MCF 10A (cell line): ENCODE measurements at regions of chr1 and their contacts with region 1.

Region 1: GRCh38 chr1:162023547-162024501 is at the start of gene OLFML2B:
- DNase-seq: peak; percentile 86
- H3K4me3 Mint-ChIP-seq: peak within 1 kb of the TSS; percentile 89
- H3K27ac Mint-ChIP-seq: peak within 1 kb of the TSS; percentile 65
- H3K4me1 Mint-ChIP-seq: peaks cover 15% of the 10 kb centered on the region
- H3K27me3 Mint-ChIP-seq: peaks cover 34% of the 10 kb centered on the region
- CTCF ChIP-seq: peak; percentile 45
- total RNA-seq, gene OLFML2B: not detected in 2 replicates

Region 2: GRCh38 chr1:161801955-161802354 is 221.9 kb before region 1 on chr1:
- CTCF ChIA-PET with region 1: interaction called, 11 read pairs
- POLR2A ChIA-PET with region 1: no interaction called
- intact Hi-C with region 1: no loop called
- DNase-seq: no peak
- H3K4me3 Mint-ChIP-seq: no peak overlapping the region
- H3K27ac Mint-ChIP-seq: no peak overlapping the region
- H3K4me1 Mint-ChIP-seq: no peaks in the 10 kb centered on the region
- H3K27me3 Mint-ChIP-seq: no peaks in the 10 kb centered on the region
- CTCF ChIP-seq: no peak

Region 3: DNA sequence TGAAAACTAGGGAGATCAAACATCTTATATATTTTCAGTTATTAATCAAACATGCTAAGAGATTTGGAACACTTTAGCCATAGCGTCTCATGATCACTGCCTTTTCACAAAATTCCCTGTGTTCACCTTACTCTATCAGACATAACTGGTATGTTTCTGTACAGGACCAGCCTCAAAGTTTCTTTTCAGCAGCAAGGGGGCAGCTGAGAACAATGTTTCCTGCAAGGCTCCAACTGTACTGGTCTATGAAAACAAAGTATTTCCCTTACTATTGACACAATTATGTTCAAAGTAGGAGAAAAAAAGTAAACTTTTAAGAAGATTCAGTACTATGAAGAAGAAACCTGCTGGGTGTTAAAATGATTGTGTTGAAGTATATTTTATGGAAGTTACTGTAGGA is 159.2 kb before region 1 on chr1:
- CTCF ChIA-PET with region 1: interaction called, 14 read pairs
- POLR2A ChIA-PET with region 1: no interaction called
- intact Hi-C with region 1: loop called (anchors 1 kb)
- DNase-seq: peak; percentile 38
- H3K4me3 Mint-ChIP-seq: no peak overlapping the region
- H3K27ac Mint-ChIP-seq: no peak overlapping the region
- H3K4me1 Mint-ChIP-seq: no peaks in the 10 kb centered on the region
- H3K27me3 Mint-ChIP-seq: no peaks in the 10 kb centered on the region
- CTCF ChIP-seq: peak; percentile 14

Region 4: DNA sequence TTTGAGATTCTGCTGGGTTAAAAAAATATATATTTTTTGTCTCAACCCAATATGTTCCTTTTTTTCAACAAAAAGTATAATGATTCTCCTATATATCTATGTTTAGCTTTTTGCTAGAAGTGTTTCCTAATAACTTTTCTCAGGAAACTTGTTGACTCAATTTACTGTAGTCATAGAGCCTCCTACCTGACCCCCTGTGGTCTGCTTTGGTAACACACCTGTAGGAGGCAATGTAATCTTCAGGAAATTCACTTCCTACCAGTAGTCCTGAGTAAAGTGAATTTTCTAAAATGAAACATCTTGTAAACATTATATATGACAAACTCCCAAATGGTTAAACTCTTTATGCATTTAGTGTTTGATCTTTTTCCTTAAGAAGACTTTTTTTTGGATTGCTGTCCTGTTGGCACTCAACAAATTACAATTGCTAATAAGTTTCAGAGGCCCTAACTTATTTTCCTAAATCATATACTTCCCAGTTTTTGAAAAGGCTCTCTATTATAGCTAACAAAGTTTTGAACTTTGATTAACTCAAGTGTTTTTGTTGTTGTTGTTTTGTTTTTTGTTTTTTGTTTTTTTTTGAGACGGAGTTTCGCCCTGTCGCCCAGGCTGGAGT is 118.4 kb before region 1 on chr1:
- CTCF ChIA-PET with region 1: interaction called, 16 read pairs
- POLR2A ChIA-PET with region 1: interaction called, 3 read pairs
- intact Hi-C with region 1: loop called (anchors 5 kb)
- DNase-seq: peak; percentile 67
- H3K4me3 Mint-ChIP-seq: no peak overlapping the region
- H3K27ac Mint-ChIP-seq: no peak overlapping the region
- H3K4me1 Mint-ChIP-seq: peaks cover 9% of the 10 kb centered on the region
- H3K27me3 Mint-ChIP-seq: no peaks in the 10 kb centered on the region
- CTCF ChIP-seq: peak; percentile 52

Region 5: GRCh38 chr1:161962091-161962887 is 61.5 kb before region 1 on chr1:
- CTCF ChIA-PET with region 1: interaction called, 4 read pairs
- POLR2A ChIA-PET with region 1: interaction called, 4 read pairs
- intact Hi-C with region 1: loop called (anchors 5 kb)
- DNase-seq: peak; percentile 71
- H3K4me3 Mint-ChIP-seq: peak overlapping the region; percentile 69
- H3K27ac Mint-ChIP-seq: peak overlapping the region; percentile 40
- H3K4me1 Mint-ChIP-seq: peaks cover 33% of the 10 kb centered on the region
- H3K27me3 Mint-ChIP-seq: no peaks in the 10 kb centered on the region
- CTCF ChIP-seq: no peak

Region 6: GRCh38 chr1:162136760-162137159 is 112.9 kb after region 1 on chr1:
- CTCF ChIA-PET with region 1: no interaction called
- POLR2A ChIA-PET with region 1: no interaction called
- intact Hi-C with region 1: no loop called
- DNase-seq: peak; percentile 71
- H3K4me3 Mint-ChIP-seq: no peak overlapping the region
- H3K27ac Mint-ChIP-seq: no peak overlapping the region
- H3K4me1 Mint-ChIP-seq: peaks cover 20% of the 10 kb centered on the region
- H3K27me3 Mint-ChIP-seq: no peaks in the 10 kb centered on the region
- CTCF ChIP-seq: no peak